ENCODE measurements at regions of chr3 and their contacts with region 1.

Region 1: GRCh38 chr3:138686771-138687221 is 78.2 kb downstream of the FAIM start:
- DNase-seq: peak in 3 of 4 donors; percentile 18 to 60 (median 26)
- ATAC-seq: peak; percentile 70
- H3K4me3 ChIP-seq: no peak overlapping the region
- H3K27ac ChIP-seq: peak overlapping the region; percentile 9 to 80 (median 66)
- H3K4me1 ChIP-seq: peaks cover 71% of the 10 kb centered on the region
- H3K27me3 ChIP-seq: no peaks in the 10 kb centered on the region
- CTCF ChIP-seq: no peak
- POLR2A ChIP-seq: no peak

Region 2: GRCh38 chr3:138609898-138610266 is 76.9 kb before region 1 on chr3:
- intact Hi-C with region 1: loop called (anchors 10 kb)
- DNase-seq: no peak
- ATAC-seq: no peak
- H3K4me3 ChIP-seq: peak overlapping the region in 1 of 2 donors; percentile 70
- H3K27ac ChIP-seq: peak overlapping the region; percentile 96 to 99 (median 97)
- H3K4me1 ChIP-seq: peaks cover 39% of the 10 kb centered on the region
- H3K27me3 ChIP-seq: no peaks in the 10 kb centered on the region
- CTCF ChIP-seq: no peak
- POLR2A ChIP-seq: no peak

Region 3: GRCh38 chr3:139319428-139320402 is 632.9 kb after region 1 on chr3:
- intact Hi-C with region 1: no loop called
- DNase-seq: peak in 2 of 4 donors; percentile 13 to 43
- ATAC-seq: no peak
- H3K4me3 ChIP-seq: no peak overlapping the region
- H3K27ac ChIP-seq: no peak overlapping the region
- H3K4me1 ChIP-seq: peaks cover 19% of the 10 kb centered on the region
- H3K27me3 ChIP-seq: no peaks in the 10 kb centered on the region
- CTCF ChIP-seq: peak in 3 of 7 experiments; percentile 4 to 18 (median 14)
- POLR2A ChIP-seq: no peak